ENCODE measurements at regions of chr22 and their contacts with region 1.

Region 1: GRCh38 chr22:22316589-22316988 is 72.0 kb downstream of the VPREB1 start:
- DNase-seq: no peak
- H3K4me3 Mint-ChIP-seq: no peak overlapping the region
- H3K27ac Mint-ChIP-seq: no peak overlapping the region
- H3K4me1 Mint-ChIP-seq: peaks cover 10% of the 10 kb centered on the region
- H3K27me3 Mint-ChIP-seq: no peaks in the 10 kb centered on the region
- CTCF ChIP-seq: no peak

Region 2: DNA sequence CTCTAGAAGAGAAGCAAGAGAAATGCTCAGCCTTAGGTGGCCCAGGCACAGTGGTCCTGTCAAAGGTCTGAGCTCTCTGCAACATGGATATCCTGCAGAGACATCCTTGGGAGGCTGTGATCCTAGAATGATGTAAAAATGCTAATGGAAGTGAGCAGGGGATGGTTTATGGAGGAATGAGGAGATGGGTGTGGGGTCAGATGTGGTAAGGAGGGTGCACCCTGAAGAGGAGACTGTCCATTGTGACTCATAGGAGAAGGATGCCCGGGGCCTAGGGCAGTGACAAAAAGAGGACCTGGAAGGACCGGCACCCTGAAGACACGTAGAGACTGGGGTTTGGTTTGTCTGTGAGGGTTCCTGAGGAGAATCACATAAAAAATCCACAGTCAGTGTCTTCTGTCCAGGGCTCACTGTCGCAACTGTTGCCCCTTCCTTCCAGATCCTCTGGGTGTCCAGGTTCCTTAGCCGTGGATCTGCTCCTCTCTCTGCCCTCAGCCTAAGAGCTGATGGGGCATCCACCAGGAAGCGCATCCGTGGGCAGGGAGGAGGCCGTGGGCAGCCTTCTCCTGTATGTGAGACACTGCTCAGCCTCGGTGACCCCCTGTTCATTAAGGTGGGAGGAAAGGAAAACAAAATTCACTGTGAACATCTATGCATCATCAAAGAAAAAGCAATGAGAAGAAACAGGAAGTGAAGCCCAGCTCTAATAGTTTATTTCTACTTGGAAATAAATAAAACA is 38.7 kb after region 1 on chr22:
- CTCF ChIA-PET with region 1: interaction called, 12 read pairs
- intact Hi-C with region 1: no loop called
- DNase-seq: no peak
- H3K4me3 Mint-ChIP-seq: no peak overlapping the region
- H3K27ac Mint-ChIP-seq: no peak overlapping the region
- H3K4me1 Mint-ChIP-seq: peaks cover 8% of the 10 kb centered on the region
- H3K27me3 Mint-ChIP-seq: peaks cover 96% of the 10 kb centered on the region
- CTCF ChIP-seq: no peak

Measured in Calu3 (cell line).